ENCODE measurements at regions of chr1 and their contacts with region 1.

Region 1: DNA sequence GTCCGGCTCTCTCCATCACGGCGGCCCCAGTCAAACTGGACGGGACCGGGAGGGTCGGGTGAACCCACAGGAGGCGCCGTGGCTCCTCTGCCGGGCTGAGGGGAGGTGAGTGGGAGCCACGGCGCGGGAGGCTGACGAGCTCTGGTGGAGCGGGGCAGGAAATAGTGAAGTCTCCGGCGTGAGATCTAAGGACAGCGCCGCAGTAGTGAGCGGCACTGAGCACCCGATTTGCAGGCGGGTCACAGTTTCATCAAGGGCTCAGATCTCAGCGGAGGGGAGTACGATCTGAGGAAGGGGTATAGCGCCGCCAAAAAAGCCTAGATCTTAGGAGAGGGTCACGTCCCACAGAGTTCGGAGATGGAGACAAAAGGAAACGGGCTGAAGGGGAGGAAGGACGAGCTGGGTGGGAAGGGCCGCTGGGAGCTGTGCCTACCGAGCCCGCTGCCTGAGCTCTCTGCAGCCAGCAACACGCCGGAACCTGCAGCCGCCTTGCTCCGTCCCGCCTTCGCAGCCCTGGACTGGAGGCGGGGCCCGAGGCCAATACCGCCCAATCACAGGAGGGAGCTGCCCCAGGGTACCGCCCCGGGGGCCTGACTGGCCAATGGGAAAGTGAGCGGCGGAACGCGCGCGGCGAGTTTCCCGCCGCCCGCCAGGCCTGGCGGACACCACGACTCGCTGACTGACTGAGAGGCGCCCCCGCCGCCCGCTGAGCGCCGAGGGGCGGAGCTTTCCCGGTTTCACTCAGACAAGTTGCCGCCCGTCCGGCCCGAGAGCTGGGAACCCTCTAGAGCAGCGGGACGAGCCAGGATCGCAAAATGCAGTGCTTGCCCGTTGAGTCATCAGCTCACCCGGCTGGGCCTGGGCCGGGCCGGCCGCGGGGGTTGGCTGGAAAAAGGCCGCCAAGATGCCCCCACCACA is 1.9 kb downstream of the SFN start:
- DNase-seq: peak; percentile 96
- H3K4me3 Mint-ChIP-seq: peak overlapping the region; percentile 82
- H3K27ac Mint-ChIP-seq: peak overlapping the region; percentile 93
- H3K4me1 Mint-ChIP-seq: peaks cover 34% of the 10 kb centered on the region
- H3K27me3 Mint-ChIP-seq: no peaks in the 10 kb centered on the region

Region 2: DNA sequence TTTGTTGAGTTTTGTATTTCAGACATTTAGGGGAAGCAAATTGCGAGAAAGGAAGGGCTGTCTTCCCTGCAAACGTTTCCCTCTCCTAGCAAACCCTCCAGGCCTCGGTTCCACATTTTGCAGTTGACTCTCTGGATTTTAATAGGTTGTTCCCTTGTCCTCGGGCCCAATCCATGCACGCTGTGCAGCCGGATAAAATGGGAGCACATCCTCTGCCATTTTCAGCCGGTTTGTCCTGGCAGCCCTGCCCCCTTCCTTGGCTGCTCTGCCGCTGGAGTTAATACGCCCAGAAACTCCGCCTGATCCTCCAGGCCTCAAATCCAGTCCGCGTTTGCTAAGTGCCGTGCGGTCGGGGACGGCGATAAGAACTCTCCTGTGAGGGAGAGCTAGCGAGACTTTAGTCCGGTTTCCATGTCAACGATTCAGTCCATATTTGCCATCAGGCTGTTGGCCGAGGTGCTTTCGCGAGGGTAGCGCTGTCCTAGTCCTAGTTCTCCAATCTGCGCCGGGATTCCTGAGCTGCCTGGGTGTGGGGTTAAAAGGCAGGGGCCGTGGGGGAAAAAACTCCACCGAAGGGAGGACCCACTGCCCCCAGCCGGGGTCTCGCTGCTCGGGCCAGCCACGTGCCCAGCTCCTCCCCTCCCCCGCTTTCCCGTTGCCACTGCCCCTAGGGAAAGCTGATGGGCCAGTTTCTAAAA is 171.9 kb before region 1 on chr1:
- CTCF ChIA-PET with region 1: no interaction called
- POLR2A ChIA-PET with region 1: interaction called, 11 read pairs
- DNase-seq: peak; percentile 93
- H3K4me3 Mint-ChIP-seq: peak overlapping the region; percentile 83
- H3K27ac Mint-ChIP-seq: peak overlapping the region; percentile 96
- H3K4me1 Mint-ChIP-seq: peaks cover 32% of the 10 kb centered on the region
- H3K27me3 Mint-ChIP-seq: no peaks in the 10 kb centered on the region

Region 3: GRCh38 chr1:26839339-26839722 is 25.5 kb before region 1 on chr1:
- CTCF ChIA-PET with region 1: no interaction called
- POLR2A ChIA-PET with region 1: no interaction called
- DNase-seq: no peak
- H3K4me3 Mint-ChIP-seq: no peak overlapping the region
- H3K27ac Mint-ChIP-seq: peak overlapping the region; percentile 66
- H3K4me1 Mint-ChIP-seq: peaks cover 26% of the 10 kb centered on the region
- H3K27me3 Mint-ChIP-seq: no peaks in the 10 kb centered on the region